ENCODE measurements at regions of chr3 and their contacts with region 1.

Region 1: GRCh38 chr3:169966428-169966950 is at the start of gene SEC62:
- DNase-seq: peak; percentile 81 to 96
- H3K4me3 ChIP-seq: peak within 1 kb of the TSS; percentile 63
- H3K27ac ChIP-seq: peak within 1 kb of the TSS; percentile 54
- H3K4me1 ChIP-seq: peaks cover 25% of the 10 kb centered on the region
- H3K27me3 ChIP-seq: no peaks in the 10 kb centered on the region
- CTCF ChIP-seq: peak; percentile 37; the same call in 1 of the 2 replicates
- total RNA-seq, gene SEC62: 61.8 and 99.6 TPM in 2 replicates

Region 2: DNA sequence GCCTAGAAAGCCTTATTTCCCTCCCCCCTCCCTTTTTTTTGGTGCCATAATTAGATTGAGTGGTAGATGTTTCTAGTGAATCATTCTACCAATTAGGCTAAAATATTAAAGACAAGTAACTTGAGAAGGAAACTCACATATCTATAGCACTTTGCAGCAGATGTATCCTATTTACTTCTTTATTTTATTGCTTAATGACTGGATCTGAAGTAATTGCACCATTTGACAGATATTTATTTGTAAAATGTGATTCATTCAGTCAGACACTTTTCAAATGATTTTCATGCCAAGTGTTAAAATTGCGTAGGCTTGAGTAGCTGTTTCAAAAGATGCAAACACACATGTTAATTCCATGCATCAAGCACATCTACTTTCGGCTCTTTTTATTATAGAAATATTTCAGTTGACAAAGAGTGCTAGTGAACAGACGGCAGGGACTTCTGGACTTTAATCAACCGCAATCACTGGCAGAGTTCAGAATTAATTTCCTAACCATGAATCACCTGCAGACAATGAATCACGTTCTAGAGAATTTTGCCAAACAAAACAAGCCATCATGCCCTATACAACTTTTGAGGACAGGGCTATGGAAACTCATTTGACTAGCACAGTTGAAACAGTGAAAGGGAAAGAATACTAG is 939.8 kb before region 1 on chr3:
- CTCF ChIA-PET with region 1: no interaction called
- POLR2A ChIA-PET with region 1: no interaction called
- intact Hi-C with region 1: no loop called
- DNase-seq: peak; percentile 41 to 87
- H3K4me3 ChIP-seq: peak overlapping the region; percentile 14; the same call in 1 of the 2 replicates
- H3K27ac ChIP-seq: peak overlapping the region; percentile 25
- H3K4me1 ChIP-seq: peaks cover 33% of the 10 kb centered on the region
- H3K27me3 ChIP-seq: no peaks in the 10 kb centered on the region
- CTCF ChIP-seq: no peak

Region 3: DNA sequence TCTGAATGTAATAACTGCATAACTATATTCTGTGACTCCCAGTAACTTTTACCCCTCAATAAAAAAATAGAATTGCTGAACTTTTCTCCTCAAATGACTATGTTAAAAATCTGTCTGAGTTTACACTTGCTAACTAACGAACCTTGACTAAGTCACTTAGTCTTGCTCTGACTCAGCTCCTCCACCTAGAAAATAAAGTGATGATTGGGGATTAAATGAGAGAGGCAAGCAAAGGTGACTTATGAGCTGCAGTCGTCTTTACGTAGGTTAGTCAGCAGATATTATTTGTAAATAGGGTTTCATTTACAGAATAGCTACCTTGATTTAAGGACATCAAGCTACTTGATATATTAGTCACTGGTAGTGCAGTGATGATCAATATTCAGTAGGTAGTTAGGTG is 779.9 kb before region 1 on chr3:
- CTCF ChIA-PET with region 1: no interaction called
- POLR2A ChIA-PET with region 1: no interaction called
- intact Hi-C with region 1: no loop called
- DNase-seq: no peak
- H3K4me3 ChIP-seq: no peak overlapping the region
- H3K27ac ChIP-seq: no peak overlapping the region
- H3K4me1 ChIP-seq: no peaks in the 10 kb centered on the region
- H3K27me3 ChIP-seq: no peaks in the 10 kb centered on the region
- CTCF ChIP-seq: no peak

Region 4: DNA sequence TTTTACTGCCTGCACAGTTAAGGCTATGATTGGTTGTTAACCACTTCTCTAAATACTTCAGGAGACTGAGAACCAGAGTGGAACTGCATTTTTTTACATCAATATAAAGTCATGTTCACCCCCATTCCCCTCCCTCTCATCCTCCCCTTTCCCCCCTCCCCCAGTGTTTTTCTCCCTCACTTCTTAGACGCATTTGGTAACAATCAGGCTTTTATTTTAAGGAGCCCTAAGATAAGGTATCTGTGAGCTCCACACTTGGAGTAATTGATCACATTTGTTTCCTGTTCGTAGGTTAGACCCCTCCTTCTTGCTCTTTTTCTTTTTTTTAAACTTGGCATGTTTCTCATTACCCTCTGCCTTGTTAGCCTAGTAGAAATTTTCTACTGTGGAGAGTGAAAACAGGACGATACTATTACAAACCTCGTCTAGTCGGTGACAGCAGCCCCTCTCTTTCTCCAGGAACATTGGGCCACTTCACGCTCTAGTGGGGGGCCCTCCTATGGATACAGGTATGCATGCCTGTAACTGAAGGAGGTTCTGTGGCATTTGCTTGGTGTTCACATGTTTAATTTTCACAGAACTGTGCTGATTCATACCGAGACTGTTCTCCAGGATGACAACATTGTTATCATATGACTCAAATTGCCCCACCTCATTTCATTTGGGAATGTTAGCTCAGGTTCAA is 617.4 kb before region 1 on chr3:
- CTCF ChIA-PET with region 1: no interaction called
- POLR2A ChIA-PET with region 1: no interaction called
- intact Hi-C with region 1: loop called (anchors 5 kb)
- DNase-seq: peak; percentile 52 to 92
- H3K4me3 ChIP-seq: peak overlapping the region; percentile 14; the same call in 1 of the 2 replicates
- H3K27ac ChIP-seq: peak overlapping the region; percentile 95
- H3K4me1 ChIP-seq: peaks cover 51% of the 10 kb centered on the region
- H3K27me3 ChIP-seq: no peaks in the 10 kb centered on the region
- CTCF ChIP-seq: no peak

Region 5: GRCh38 chr3:169812332-169813235 is 153.9 kb before region 1 on chr3 and contains the starts of genes LRRC34 and LRRIQ4:
- CTCF ChIA-PET with region 1: no interaction called
- POLR2A ChIA-PET with region 1: interaction called, 6 read pairs
- intact Hi-C with region 1: loop called (anchors 1 kb)
- DNase-seq: peak; percentile 57 to 74
- H3K4me3 ChIP-seq: peak within 1 kb of the TSS; percentile 61
- H3K27ac ChIP-seq: no peak within 1 kb of the TSS
- H3K4me1 ChIP-seq: peaks cover 16% of the 10 kb centered on the region
- H3K27me3 ChIP-seq: no peaks in the 10 kb centered on the region
- CTCF ChIP-seq: 0 out of 2 replicates have a peak, but pooled peaks have one; percentile 6
- total RNA-seq, gene LRRC34: 9.6 and 10.3 TPM in 2 replicates
- total RNA-seq, gene LRRIQ4: 1.3 TPM in 2 replicates

Region 6: GRCh38 chr3:169954142-169954756 is 12.2 kb before region 1 on chr3:
- CTCF ChIA-PET with region 1: no interaction called
- POLR2A ChIA-PET with region 1: interaction called, 10 read pairs
- intact Hi-C with region 1: no loop called
- DNase-seq: no peak
- H3K4me3 ChIP-seq: no peak overlapping the region
- H3K27ac ChIP-seq: no peak overlapping the region
- H3K4me1 ChIP-seq: no peaks in the 10 kb centered on the region
- H3K27me3 ChIP-seq: no peaks in the 10 kb centered on the region
- CTCF ChIP-seq: no peak

Region 7: GRCh38 chr3:170717410-170718402 is 751.2 kb after region 1 on chr3:
- CTCF ChIA-PET with region 1: interaction called, 10 read pairs
- POLR2A ChIA-PET with region 1: no interaction called
- intact Hi-C with region 1: no loop called
- DNase-seq: peak; percentile 60 to 63
- H3K4me3 ChIP-seq: no peak overlapping the region
- H3K27ac ChIP-seq: no peak overlapping the region
- H3K4me1 ChIP-seq: peaks cover 26% of the 10 kb centered on the region
- H3K27me3 ChIP-seq: no peaks in the 10 kb centered on the region
- CTCF ChIP-seq: no peak

Measured in PC-9 (cell line).